Common myeloid progenitor, CD34-positive (primary cell): ENCODE measurements at regions of chr18 and their contacts with region 1.

Region 1: DNA sequence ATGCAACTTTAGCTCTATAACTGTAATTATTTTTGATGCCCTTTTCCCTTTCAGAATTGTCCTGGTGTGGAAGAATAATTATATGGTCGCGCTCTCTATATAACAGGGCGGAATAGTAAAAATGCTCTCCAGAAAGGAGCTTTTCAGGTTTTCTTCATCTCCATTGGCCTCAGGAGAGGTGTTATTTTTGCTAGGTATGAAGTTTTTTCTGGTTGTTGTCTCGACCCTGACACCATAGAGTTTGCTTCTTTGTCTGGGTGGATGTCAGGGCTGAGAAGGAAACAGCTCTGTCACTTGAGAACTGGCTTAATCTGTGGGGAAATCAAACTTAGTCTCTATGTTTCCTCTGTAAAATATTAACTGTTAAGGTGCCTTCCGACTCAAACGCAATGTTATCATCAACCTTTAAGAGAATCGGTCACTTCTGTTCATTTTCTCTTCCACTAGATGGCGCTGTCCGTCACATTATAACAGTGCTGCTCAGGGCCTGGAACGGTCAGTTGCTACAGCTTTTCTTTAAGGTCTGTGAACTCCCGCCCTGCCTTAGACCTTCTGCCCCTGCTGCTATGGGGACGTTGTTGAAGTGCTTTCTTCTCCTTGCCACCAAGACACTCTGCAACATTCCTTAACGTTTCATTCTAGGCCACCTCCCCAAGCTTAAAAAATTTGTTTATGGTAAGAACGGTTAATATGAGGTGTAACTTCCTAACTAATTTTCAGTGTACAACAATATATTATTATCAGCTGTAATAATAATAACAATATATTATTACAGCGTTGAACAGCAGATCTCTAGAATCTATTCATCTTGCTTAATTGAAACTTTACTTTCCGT is 23.8 kb upstream of the SERPINB12 start:
- DNase-seq: peak; percentile 75 to 85 (median 83)
- H3K4me3 ChIP-seq: peak overlapping the region in 1 of 7 experiments; percentile 41
- H3K27ac ChIP-seq: no peak overlapping the region
- H3K4me1 ChIP-seq: no peaks in the 10 kb centered on the region
- H3K27me3 ChIP-seq: no peaks in the 10 kb centered on the region

Region 2: DNA sequence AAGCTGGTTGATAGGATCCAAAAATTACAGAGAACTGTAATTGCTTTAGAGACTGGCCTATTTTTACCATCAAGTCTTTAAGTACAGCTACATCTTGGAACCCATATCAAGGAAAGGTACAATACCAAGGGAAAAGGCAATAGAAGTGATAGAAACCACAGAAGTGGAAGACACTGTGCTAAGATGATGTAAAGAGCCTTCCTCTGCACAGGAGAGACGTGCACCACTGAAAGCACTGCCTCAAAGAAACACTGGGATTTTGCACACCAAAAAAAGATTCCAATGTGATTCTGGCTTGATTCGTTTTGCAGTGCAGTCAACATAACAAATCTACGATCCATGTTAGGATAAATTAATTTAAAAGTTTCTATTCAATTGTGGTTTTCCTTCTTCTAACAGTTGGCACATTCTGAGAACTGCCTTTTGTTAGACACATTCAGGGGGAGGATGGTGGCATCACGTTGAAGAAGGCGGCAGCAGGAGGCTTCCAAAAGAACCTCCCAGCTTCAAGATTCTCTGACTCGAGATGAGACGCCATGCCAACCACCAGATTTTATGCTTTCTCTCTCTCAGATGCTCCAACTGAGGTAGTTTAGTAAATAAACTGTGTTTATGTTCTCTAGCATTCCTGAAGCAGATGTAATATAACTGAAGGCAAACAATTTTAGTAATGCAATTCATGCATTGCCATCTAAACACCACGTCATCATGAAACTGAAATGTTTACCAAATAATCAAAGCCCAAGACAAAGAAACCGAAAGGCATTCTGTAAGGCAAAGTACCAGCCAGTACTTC is 301.7 kb before region 1 on chr18:
- CTCF ChIA-PET with region 1: no interaction called
- POLR2A ChIA-PET with region 1: no interaction called
- DNase-seq: no peak
- H3K4me3 ChIP-seq: peak overlapping the region in 1 of 7 experiments; percentile 28
- H3K27ac ChIP-seq: no peak overlapping the region
- H3K4me1 ChIP-seq: peaks cover 4 to 38% (median 11%) of the 10 kb centered on the region in 4 experiments
- H3K27me3 ChIP-seq: no peaks in the 10 kb centered on the region

Region 3: GRCh38 chr18:63505566-63506335 is 12.6 kb before region 1 on chr18:
- CTCF ChIA-PET with region 1: interaction called, 21 read pairs
- POLR2A ChIA-PET with region 1: no interaction called
- DNase-seq: peak; percentile 34 to 60 (median 50)
- H3K4me3 ChIP-seq: no peak overlapping the region
- H3K27ac ChIP-seq: no peak overlapping the region
- H3K4me1 ChIP-seq: peaks cover 0 to 13% (median 0%) of the 10 kb centered on the region in 4 experiments
- H3K27me3 ChIP-seq: no peaks in the 10 kb centered on the region

Region 4: GRCh38 chr18:63539904-63540510 is 21.6 kb after region 1 on chr18:
- CTCF ChIA-PET with region 1: interaction called, 14 read pairs
- POLR2A ChIA-PET with region 1: no interaction called
- DNase-seq: no peak
- H3K4me3 ChIP-seq: no peak overlapping the region
- H3K27ac ChIP-seq: no peak overlapping the region
- H3K4me1 ChIP-seq: no peaks in the 10 kb centered on the region
- H3K27me3 ChIP-seq: no peaks in the 10 kb centered on the region

Region 5: DNA sequence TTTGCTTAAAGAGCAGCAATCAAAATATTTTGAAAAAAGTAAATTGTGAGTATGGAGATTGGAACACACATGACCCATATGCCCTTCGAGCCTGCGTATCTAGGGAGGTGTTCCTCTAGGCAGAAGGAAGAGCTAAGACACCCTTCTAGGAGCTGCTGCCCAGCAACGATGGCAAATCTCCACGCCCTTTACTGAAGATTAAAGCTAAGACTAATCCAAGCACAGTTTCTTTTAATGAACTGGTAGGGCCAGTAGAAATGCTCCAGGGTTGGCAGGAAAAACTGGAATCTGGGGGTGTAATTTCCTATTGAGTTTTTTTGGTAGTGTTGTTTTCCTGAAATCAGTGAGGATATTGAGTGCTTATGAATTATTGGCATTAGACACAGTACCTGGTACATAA is 68.0 kb after region 1 on chr18:
- CTCF ChIA-PET with region 1: interaction called, 27 read pairs
- POLR2A ChIA-PET with region 1: no interaction called
- DNase-seq: no peak
- H3K4me3 ChIP-seq: no peak overlapping the region
- H3K27ac ChIP-seq: no peak overlapping the region
- H3K4me1 ChIP-seq: peaks cover 0 to 25% (median 2%) of the 10 kb centered on the region in 4 experiments
- H3K27me3 ChIP-seq: no peaks in the 10 kb centered on the region

Region 6: DNA sequence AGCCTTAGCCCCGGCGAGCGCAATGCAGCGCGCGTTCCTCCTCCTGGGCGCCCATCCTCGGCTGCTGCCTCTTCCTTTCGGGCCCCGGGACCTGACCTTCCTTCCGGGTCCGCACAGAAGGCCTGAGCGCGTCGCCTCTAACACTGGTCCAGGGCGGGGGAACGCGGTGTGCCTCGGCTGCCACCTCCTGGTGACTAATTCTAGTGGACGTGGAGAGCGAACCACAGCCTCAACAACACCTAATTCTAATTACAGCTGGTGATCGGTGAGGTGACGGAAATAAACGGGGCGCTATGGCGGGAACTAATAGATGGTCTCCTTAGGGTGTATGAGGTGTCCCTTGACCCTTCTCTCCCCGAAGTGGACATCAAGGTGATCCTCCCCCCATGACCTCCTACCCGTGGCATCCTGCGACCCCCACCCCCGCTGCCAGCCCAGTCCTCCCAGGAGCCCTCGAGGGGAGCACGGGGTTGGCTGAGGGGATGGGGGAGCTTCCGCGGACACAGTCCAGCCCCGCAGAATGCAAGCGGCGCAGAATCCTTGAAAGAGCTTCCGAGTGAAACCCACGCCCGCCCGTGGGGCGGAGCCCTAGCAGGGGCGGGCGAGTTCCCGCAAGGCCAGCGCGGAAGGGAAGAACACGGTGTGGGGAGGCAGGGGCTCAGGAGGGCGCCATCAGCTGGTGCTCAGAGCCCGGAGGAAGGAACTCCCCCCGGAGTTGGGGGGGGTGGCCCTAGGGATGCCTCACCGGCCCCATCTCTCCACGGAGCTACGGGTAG is 417.9 kb after region 1 on chr18:
- CTCF ChIA-PET with region 1: interaction called, 12 read pairs
- POLR2A ChIA-PET with region 1: no interaction called
- DNase-seq: peak; percentile 78 to 88 (median 86)
- H3K4me3 ChIP-seq: peak overlapping the region; percentile 39 to 80 (median 67)
- H3K27ac ChIP-seq: no peak overlapping the region
- H3K4me1 ChIP-seq: peaks cover 6 to 15% (median 14%) of the 10 kb centered on the region in 4 experiments
- H3K27me3 ChIP-seq: peaks cover 0 to 5% (median 0%) of the 10 kb centered on the region in 5 experiments